Right ventricle myocardium superior (tissue), 1 donor: ENCODE measurements at regions of chr1 and their contacts with region 1.

Region 1: GRCh38 chr1:108746372-108747205 is at the start of gene STXBP3:
- DNase-seq: peak; percentile 99
- ATAC-seq: peak; percentile 98
- total RNA-seq, gene STXBP3: 23.0 TPM

Region 2: DNA sequence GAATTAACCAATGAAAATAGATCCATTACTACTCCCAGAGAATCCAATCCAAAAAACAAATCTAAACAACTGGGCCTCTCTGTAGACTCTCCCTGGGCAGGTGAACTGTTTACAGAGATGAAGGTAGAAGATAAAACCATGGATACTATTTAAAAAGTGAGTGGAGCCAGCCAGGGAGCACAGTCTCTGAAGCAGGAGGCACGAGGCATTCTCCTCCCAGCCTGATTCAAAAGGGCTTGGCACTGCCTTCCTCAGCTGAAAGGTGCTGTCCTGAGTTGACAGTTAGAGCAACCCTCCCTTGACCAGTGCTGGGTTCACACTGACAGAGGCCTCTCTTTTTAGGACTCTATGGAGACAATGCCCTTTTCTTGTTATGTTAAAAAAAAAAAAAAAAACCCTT is 122.5 kb before region 1 on chr1:
- intact Hi-C with region 1: no loop called
- DNase-seq: no peak
- ATAC-seq: peak; percentile 79

Region 3: DNA sequence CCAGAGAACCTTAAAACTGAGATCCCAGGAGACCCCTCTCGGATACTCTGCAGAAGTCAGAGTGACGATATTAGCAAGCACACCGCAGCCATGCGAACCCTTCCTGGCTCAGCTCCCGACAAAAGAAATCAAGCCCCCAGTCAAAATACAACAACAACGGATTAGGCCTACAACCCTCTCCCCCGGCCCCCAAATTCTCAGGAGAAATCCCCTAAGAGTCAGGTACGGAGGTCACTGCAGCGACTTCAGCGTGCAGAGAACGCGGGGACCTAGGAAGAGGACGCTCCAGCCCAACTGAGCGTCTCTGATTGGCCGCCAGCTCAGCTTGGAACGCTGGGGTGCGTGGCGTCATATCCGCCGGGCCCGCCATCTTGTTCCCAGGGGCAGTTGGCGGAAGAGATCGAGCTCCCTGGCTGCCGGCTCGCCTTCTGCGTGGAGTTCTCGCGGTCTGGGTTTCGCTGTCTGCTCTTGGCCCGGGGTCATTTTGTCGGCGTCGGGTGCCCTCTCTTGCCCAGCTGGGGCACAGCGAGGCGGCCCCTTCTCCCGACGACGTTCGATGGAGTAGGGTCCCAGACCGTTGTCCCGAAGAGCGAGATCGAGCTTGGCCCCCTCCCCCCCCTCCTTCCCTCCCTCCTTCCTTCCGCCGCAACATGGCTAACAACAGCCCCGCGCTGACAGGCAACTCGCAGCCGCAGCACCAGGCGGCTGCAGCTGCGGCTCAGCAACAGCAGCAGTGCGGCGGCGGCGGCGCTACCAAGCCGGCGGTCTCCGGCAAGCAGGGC is 54.5 kb before region 1 on chr1 and contains the start of gene PRPF38B:
- intact Hi-C with region 1: loop called (anchors 10 kb)
- DNase-seq: peak; percentile 97
- ATAC-seq: peak; percentile 99
- total RNA-seq, gene PRPF38B: 16.9 TPM